Activated T-helper 1 cell treated with anti-CD3 and anti-CD28 coated beads, Interleukin-12 subunit alpha, Interleukin-12 subunit beta, Interleukin-2, Interleukin-4 antibody, amounts not matched to agents 30 ng/mL and 10 ng/mL and 1 ng/mL, durations not matched to agents 14 hours and 24 hours and 36 hours (primary cell): ENCODE measurements at regions of chr5 and their contacts with region 1.

Region 1: DNA sequence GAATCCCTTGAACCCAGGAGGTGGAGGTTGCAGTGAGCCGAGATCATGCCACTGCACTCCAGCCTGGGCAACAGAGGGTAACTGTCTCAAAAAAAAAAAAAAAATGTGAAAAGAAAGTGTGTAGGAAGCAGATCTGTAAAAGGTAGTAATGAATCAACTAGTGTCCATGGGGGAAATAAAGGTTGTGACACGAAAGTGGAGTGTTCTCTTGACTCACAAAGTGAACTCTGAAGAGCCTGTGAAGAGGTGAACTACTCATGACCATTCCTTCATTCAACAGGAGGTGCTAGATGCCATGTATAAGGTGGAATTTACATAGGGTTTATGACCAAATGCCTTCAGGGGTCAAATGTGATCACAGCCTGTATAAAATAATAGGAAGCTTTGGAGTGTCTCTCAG is 12.8 kb downstream of the IQGAP2 start:
- DNase-seq: no peak
- H3K4me3 Mint-ChIP-seq: no peak overlapping the region
- H3K27ac Mint-ChIP-seq: peak overlapping the region; percentile 29
- H3K4me1 Mint-ChIP-seq: peaks cover 26% of the 10 kb centered on the region
- H3K27me3 Mint-ChIP-seq: no peaks in the 10 kb centered on the region

Region 2: GRCh38 chr5:76425928-76426804 is 10.3 kb after region 1 on chr5:
- intact Hi-C with region 1: no loop called
- DNase-seq: no peak
- H3K4me3 Mint-ChIP-seq: no peak overlapping the region
- H3K27ac Mint-ChIP-seq: no peak overlapping the region
- H3K4me1 Mint-ChIP-seq: peaks cover 11% of the 10 kb centered on the region
- H3K27me3 Mint-ChIP-seq: no peaks in the 10 kb centered on the region

Region 3: DNA sequence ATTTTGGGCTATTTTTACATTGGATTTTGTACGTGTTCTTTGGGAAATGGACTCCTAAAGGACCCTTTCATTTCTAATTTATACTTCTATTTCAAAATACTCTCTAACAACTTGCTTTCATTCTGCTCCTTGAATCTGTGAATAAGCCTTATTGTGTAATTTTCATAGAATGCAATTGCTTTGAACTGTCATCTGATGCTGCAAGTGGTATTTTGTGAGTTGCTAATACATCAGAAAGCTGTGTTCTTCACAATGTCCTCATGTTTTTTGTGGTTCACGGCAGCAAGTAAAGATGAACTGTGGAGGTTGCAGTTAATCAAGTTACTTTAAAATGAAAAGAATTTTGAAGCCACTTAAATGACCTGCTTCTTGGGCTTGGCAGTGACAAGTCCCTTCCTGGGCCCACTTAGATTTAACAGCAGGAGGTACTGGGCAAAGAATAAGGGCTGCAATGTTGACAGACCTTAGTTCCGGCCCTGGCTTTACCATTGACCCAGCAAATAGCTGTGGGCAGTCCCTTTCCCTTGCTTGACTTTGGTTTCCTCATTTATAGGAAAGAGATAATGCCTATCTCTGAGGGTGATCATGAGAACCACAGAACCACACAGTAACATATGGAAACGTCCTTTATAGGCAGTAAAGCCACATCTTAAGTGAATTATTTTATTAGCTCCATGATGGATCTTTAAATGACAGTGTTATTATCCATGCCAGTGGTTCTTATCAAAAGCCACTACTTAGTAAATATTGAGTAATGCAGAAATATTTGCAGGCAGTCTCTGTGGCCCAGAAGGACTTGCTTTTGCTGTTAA is 42.0 kb after region 1 on chr5:
- intact Hi-C with region 1: loop called (anchors 5 kb)
- DNase-seq: no peak
- H3K4me3 Mint-ChIP-seq: no peak overlapping the region
- H3K27ac Mint-ChIP-seq: no peak overlapping the region
- H3K4me1 Mint-ChIP-seq: peaks cover 34% of the 10 kb centered on the region
- H3K27me3 Mint-ChIP-seq: no peaks in the 10 kb centered on the region